ENCODE measurements at regions of chr9 and their contacts with region 1.

Region 1: DNA sequence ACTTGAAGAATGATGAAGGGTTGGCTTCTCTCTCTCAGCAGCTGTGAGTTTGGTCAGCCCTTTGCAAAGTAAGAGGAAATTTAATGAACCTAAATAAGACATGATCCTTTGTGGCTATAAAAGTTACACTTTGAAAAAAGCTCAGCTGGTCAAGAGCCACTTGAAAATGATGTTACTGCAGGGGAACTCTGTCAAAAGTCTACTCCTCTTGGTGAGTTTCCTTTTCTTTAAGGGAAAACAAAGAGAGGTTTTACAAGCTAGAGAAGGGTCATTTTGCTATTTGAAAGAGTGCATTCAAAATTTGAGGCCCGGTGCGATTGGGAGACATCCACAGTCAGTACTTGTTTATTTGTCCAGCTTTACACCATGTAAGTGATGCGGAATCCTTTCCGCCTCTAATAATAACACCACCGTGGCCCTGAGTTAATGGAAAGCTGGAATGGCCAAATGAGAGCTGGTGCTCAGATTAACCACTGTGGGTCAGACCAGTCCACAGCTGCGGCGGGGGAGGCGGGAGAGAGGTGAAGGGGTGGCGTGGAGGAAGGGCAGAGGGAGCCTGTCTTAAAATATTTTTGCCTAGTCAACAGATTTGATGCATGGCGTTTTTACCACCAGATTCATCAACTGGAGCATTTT is 404.0 kb downstream of the TLE4 start:
- DNase-seq: peak; percentile 87
- ATAC-seq: peak; percentile 87 to 88
- H3K4me3 ChIP-seq: peak overlapping the region; percentile 5 to 44 (median 32)
- H3K27ac ChIP-seq: peak overlapping the region; percentile 78 to 89 (median 82)
- H3K4me1 ChIP-seq: peaks cover 16 to 31% of the 10 kb centered on the region in 2 donors
- H3K27me3 ChIP-seq: no peaks in the 10 kb centered on the region
- CTCF ChIP-seq: peak in 2 of 5 experiments; percentile 36 to 49
- POLR2A ChIP-seq: no peak

Region 2: DNA sequence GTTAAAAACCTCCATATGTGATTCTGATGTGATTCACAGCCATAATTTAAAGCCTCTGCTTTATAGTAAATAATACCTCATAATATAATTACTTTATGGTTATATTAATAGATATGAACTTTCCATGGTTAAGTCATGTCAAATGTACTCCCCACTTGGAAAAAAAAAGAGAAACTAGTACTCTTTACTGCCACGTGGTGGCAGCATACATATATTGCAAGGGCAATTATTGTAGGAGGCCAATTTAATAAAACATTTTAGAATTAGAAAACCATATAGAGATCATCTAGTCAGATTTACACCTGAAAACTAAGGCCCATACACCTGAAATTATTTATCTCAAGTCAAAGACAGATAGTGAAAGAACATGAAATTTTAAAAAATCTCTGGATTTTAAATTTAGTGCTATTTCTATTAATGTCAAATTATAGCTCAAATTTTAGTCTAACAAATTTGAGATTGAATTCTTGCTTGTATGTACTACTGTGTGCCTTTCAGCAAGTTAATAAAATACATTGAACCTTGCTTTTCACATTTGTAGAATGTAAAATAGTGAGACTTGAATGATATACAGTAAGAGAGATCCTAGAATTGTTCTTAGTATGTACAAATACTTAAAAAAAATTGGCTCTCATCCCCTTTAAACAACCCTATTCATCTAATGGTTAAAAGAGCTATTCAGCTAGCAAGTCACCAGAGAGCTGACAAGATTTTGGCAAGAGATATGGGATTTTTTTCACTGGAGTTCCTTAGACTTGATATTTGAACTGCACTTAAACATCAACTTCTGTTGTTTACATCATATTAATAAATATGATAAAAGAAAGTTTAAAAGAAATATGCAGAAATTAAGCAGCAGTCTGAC is 199.8 kb after region 1 on chr9:
- in situ Hi-C with region 1: no loop called
- intact Hi-C with region 1: loop called (anchors 5 kb)
- DNase-seq: no peak
- ATAC-seq: no peak
- H3K4me3 ChIP-seq: no peak overlapping the region
- H3K27ac ChIP-seq: no peak overlapping the region
- H3K4me1 ChIP-seq: no peaks in the 10 kb centered on the region
- H3K27me3 ChIP-seq: no peaks in the 10 kb centered on the region
- CTCF ChIP-seq: peak in 4 of 5 experiments; percentile 45 to 72 (median 57)
- POLR2A ChIP-seq: no peak

Measured in gastrocnemius medialis (tissue), 4 donors.